ENCODE measurements at regions of chr16 and their contacts with region 1.

Region 1: DNA sequence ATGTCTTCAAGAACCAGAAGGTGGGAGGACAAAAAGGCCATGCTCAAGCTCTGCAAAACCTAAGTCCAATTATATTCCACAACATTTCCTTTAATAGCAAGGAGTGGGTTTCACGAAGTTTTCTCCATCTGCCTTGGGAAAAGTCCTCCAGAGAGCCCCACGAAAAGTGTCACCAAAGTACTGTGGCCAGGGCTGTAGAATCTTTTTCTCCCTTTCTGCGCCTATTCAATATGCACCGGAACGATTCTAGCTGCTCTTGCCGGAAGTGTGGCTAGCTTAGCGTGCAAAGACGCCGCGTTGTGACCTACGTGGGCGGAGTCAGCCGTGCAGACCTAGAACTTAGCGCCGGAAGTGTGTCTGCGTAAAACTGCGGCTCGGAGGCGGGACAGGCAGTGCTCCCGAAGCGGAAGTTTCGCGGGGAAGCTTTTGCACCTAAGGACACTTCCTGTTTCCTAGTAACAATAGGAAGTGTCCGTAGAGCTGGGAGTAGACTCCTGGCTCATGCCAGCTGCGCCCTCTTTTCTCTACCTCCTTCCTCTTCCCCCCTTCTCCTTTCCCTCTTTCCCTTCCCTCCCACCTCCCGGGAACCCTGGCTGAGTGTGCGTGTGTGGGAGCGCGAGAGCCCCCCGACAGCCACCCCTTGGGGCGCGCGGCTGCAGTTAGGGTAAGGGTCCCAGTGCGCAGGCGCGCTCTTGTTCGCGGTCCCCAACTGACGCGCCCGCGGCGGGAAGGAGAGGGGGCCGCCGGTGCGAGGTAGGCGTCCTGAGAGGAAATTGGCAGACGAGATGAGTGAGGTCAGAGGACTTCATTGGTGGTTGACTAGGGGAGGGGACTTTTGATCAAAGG is at the starts of genes ZNF646 and ZNF668:
- DNase-seq: peak; percentile 98
- H3K4me3 ChIP-seq: peak within 1 kb of the TSS; percentile 99
- H3K27ac ChIP-seq: peak within 1 kb of the TSS; percentile 96
- H3K27me3 ChIP-seq: no peaks in the 10 kb centered on the region
- CTCF ChIP-seq: 0 out of 2 replicates have a peak, but pooled peaks have one; percentile 1
- polyA plus RNA-seq, gene ZNF646: 2.4 and 4.5 TPM in 2 replicates
- polyA plus RNA-seq, gene ZNF668: 5.9 and 8.6 TPM in 2 replicates

Region 2: DNA sequence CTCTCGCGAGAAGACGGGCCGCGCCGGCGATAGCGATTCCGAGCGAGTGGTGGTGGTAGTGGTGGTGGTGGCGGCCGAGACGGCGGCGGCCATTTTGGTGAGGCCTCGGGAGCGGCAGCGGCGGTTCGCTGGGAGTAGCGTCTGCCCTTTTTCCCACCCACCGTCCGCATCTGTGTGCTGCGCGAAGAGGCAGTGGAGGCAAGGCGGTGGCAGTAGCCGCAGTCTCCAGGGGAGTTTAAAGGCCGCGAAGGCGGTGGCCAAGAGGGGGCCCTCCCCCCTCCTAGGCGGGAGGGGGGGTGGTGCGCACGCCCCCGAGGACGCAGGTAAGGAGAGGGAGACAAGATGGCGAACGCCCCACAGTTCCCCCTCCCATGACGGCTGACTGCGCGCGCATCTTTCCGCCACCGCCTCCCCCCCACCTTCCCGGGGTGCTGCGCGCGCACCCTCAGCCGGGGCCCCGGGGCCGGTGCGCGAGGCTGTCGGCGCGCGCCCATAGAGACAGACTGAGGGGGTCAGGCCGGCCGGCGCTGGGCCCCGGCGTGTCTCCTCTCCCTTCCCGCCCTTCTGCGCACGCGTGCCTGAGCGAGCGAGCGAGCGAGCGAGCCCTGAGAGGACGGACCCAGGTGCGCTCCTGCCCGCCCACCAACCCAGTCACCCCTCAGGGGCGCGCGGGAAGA is 375.9 kb before region 1 on chr16:
- CTCF ChIA-PET with region 1: no interaction called
- POLR2A ChIA-PET with region 1: no interaction called
- DNase-seq: peak; percentile 95
- H3K4me3 ChIP-seq: peak overlapping the region; percentile 93
- H3K27ac ChIP-seq: peak overlapping the region; percentile 100
- H3K27me3 ChIP-seq: no peaks in the 10 kb centered on the region
- CTCF ChIP-seq: no peak

Region 3: GRCh38 chr16:30984669-30985400 is 89.4 kb before region 1 on chr16 and contains the start of gene HSD3B7:
- CTCF ChIA-PET with region 1: interaction called, 5 read pairs
- POLR2A ChIA-PET with region 1: interaction called, 11 read pairs
- DNase-seq: peak; percentile 44
- H3K4me3 ChIP-seq: peak within 1 kb of the TSS; percentile 53
- H3K27ac ChIP-seq: peak within 1 kb of the TSS; percentile 11
- H3K27me3 ChIP-seq: no peaks in the 10 kb centered on the region
- CTCF ChIP-seq: peak; percentile 90
- polyA plus RNA-seq, gene HSD3B7: 6.1 and 9.5 TPM in 2 replicates

Region 4: DNA sequence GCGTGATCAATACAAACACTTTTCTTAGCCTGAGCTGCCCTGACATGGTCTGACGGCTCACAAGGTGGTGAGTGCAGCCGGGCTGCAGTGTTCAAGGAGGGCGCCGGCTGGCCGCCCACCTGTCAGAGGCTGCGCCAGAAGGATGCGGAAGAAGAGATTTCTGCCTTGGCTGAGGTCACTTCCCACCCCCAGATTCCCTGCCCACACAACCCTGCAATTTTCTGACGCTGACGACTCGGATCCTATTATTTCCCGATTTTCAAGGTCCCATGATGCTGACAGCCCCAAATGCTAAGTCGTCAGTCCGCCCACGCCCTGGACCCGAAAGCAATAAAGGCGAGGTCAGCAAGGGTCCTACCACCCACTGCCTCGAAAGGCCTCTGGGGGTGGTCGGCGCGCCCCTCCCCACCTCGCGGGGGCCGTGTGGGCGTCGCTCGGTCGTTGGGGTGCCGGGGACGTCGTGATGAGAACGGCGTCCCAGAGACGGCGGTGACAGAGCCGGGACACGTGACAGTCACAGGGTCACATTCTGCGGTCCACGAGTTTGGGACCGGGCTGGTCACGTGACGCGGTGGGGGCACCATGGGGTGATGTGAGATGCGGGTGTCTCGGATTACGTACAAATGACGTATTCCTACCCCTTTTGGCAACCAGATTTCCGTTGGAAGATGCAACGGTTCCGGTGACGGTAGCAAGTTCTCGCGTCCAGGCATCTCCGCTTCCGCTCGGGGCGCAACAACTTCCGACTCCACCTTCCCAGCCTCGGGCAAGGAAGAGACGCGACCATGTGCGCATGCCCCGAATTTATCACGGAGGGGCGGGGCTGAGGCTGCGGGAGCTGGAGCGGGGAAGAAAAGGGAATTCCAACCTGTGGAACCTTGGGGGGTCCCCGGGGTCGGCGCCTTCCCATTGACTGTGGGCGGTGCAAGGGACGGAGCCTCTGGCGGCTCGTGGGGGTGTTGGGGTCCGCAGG is 41.2 kb before region 1 on chr16 and contains the start of gene STX4:
- CTCF ChIA-PET with region 1: no interaction called
- POLR2A ChIA-PET with region 1: interaction called, 13 read pairs
- DNase-seq: peak; percentile 94
- H3K4me3 ChIP-seq: peak within 1 kb of the TSS; percentile 100
- H3K27ac ChIP-seq: peak within 1 kb of the TSS; percentile 96
- H3K27me3 ChIP-seq: no peaks in the 10 kb centered on the region
- CTCF ChIP-seq: no peak
- polyA plus RNA-seq, gene STX4: 43.7 and 45.9 TPM in 2 replicates

Region 5: GRCh38 chr16:31117391-31118197 is 43.4 kb after region 1 on chr16 and contains the start of gene KAT8:
- CTCF ChIA-PET with region 1: no interaction called
- POLR2A ChIA-PET with region 1: interaction called, 15 read pairs
- DNase-seq: peak; percentile 94
- H3K4me3 ChIP-seq: peak within 1 kb of the TSS; percentile 91
- H3K27ac ChIP-seq: peak within 1 kb of the TSS; percentile 96
- H3K27me3 ChIP-seq: no peaks in the 10 kb centered on the region
- CTCF ChIP-seq: no peak
- polyA plus RNA-seq, gene KAT8: 23.0 and 24.7 TPM in 2 replicates

Region 6: GRCh38 chr16:31128711-31129567 is 54.7 kb after region 1 on chr16:
- CTCF ChIA-PET with region 1: no interaction called
- POLR2A ChIA-PET with region 1: no interaction called
- DNase-seq: no peak
- H3K4me3 ChIP-seq: no peak overlapping the region
- H3K27ac ChIP-seq: no peak overlapping the region
- H3K27me3 ChIP-seq: no peaks in the 10 kb centered on the region
- CTCF ChIP-seq: no peak

Region 7: GRCh38 chr16:31167315-31167714 is 93.1 kb after region 1 on chr16:
- CTCF ChIA-PET with region 1: no interaction called
- POLR2A ChIA-PET with region 1: no interaction called
- DNase-seq: no peak
- H3K4me3 ChIP-seq: no peak overlapping the region
- H3K27ac ChIP-seq: no peak overlapping the region
- H3K27me3 ChIP-seq: peaks cover 9% of the 10 kb centered on the region
- CTCF ChIP-seq: no peak

Measured in AG04450 (cell line).